CD8-positive, alpha-beta T cell (primary cell): ENCODE measurements at regions of chr10 and their contacts with region 1.

Region 1: DNA sequence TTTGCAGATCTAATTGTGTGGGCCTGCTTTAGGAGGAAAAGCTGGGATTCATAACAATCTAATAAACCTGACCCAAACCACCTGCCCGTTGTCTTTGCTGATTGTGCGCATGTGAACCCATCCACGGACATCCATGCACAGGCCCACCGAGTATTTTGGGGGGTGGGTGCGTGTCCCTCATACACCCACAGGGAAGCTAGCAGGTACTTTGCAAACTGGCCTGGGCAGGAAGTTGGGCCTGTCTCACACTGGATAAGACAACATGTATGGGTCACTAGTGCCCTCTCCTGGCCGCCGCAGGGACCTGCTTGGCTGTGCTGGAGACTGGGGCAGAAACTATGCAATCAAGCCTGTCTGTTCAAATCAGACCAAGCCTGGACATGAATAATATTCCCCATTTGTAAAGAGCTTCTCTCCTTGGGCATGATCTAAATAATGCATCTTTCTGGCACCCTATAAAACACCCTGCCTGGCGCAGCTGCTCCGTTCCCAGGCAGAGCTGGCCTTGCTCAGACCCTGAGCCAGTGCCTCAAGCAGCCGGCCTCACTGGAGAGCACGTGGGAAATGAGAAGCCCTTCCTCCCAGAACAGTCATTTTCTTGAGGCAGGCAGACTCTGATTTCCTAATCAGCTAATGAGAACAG is 15.8 kb downstream of the ECHDC3 start:
- DNase-seq: peak; percentile 59 to 88 (median 81)
- ATAC-seq: peak; percentile 99
- H3K4me3 ChIP-seq: no peak overlapping the region
- H3K4me3 Mint-ChIP-seq: no peak overlapping the region
- H3K27ac ChIP-seq: no peak overlapping the region
- H3K27ac Mint-ChIP-seq: no peak overlapping the region
- H3K4me1 ChIP-seq: no peaks in the 10 kb centered on the region
- H3K4me1 Mint-ChIP-seq: peaks cover 3% of the 10 kb centered on the region
- H3K27me3 ChIP-seq: no peaks in the 10 kb centered on the region
- H3K27me3 Mint-ChIP-seq: no peaks in the 10 kb centered on the region
- CTCF ChIP-seq: peak; percentile 81

Region 2: DNA sequence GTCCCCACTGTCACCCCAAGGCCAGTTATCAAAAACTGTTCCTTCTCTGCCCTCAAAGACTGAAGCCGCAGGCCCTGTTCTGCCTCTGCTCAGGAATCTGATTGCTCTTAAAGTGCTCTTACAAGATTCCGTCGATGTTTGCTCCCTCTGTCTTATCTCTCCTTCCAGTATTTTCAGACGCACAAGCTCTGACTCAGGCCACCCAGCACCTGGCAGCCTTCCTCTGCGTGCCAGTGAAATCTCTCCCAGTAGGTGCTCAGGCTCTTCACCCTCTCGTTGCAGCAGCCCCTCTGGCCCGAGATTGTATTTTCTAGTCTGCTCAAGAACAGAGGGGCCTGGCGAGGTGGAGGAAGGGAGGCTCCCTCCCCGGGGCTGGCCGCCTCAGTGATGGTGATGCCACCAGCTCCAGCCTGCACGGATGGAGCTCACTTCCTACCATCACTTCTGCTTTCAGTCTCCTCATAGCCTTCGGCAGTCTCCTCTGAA is 422.7 kb before region 1 on chr10:
- CTCF ChIA-PET with region 1: no interaction called
- POLR2A ChIA-PET with region 1: no interaction called
- intact Hi-C with region 1: loop called in 1 of 2 experiments (anchors 5 kb)
- DNase-seq: peak in 1 of 9 experiments; percentile 48
- ATAC-seq: no peak
- H3K4me3 ChIP-seq: no peak overlapping the region
- H3K4me3 Mint-ChIP-seq: no peak overlapping the region
- H3K27ac ChIP-seq: no peak overlapping the region
- H3K27ac Mint-ChIP-seq: peak overlapping the region; percentile 80
- H3K4me1 ChIP-seq: peaks cover 14% of the 10 kb centered on the region
- H3K4me1 Mint-ChIP-seq: peaks cover 47% of the 10 kb centered on the region
- H3K27me3 ChIP-seq: no peaks in the 10 kb centered on the region
- H3K27me3 Mint-ChIP-seq: no peaks in the 10 kb centered on the region
- CTCF ChIP-seq: no peak

Region 3: DNA sequence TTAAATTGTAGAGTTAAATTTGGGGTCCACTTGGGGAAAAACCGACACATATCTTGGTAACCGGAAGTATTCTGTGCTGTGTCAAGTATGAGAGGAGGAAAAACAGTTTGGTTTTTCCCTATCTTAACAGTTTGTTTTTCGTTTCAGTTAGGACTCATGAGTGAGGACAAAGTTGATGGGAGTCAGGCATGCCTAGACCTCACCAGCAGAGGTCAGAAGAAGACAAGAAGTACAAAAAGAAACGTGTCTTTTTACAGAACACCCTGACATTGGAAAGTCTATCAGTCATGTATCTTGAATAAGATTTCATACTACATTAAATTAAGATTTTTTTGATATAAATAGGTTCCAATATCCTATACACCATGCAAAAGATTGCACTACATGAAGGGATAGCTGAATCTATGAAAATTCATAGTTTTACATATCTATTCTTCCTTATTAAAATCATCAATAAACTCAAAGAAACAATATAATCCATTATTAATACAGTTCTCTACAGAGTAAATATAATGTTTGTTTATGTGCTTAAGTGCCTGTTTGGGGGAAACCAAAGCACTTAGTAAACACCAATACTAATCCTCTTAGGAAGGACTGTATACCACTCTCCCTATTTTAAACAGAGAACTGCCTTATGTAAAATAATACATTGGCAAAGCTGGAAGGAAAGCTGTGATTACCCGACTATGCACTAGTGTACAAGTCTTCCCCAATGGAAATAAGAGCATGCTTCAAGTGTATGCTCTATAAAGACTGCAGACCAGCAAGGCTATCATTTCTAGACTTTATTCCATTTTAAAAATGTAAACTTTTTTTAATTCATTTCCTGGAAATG is 242.1 kb before region 1 on chr10:
- CTCF ChIA-PET with region 1: interaction called, 104 read pairs
- POLR2A ChIA-PET with region 1: interaction called, 3 read pairs
- intact Hi-C with region 1: loop called (anchors 1 kb)
- DNase-seq: peak in 7 of 9 experiments; percentile 3 to 77 (median 45)
- ATAC-seq: peak; percentile 85
- H3K4me3 ChIP-seq: no peak overlapping the region
- H3K4me3 Mint-ChIP-seq: no peak overlapping the region
- H3K27ac ChIP-seq: no peak overlapping the region
- H3K27ac Mint-ChIP-seq: no peak overlapping the region
- H3K4me1 ChIP-seq: peaks cover 6% of the 10 kb centered on the region
- H3K4me1 Mint-ChIP-seq: peaks cover 4% of the 10 kb centered on the region
- H3K27me3 ChIP-seq: no peaks in the 10 kb centered on the region
- H3K27me3 Mint-ChIP-seq: no peaks in the 10 kb centered on the region
- CTCF ChIP-seq: peak; percentile 67

Region 4: GRCh38 chr10:11684717-11685645 is 73.0 kb before region 1 on chr10:
- CTCF ChIA-PET with region 1: interaction called, 3 read pairs
- POLR2A ChIA-PET with region 1: no interaction called
- intact Hi-C with region 1: loop called in 1 of 2 experiments (anchors 2 kb)
- DNase-seq: peak; percentile 24 to 86 (median 62)
- ATAC-seq: peak; percentile 81
- H3K4me3 ChIP-seq: peak overlapping the region; percentile 45 to 47
- H3K4me3 Mint-ChIP-seq: peak overlapping the region; percentile 86
- H3K27ac ChIP-seq: peak overlapping the region; percentile 79 to 90
- H3K27ac Mint-ChIP-seq: peak overlapping the region; percentile 98
- H3K4me1 ChIP-seq: peaks cover 56% of the 10 kb centered on the region
- H3K4me1 Mint-ChIP-seq: peaks cover 70% of the 10 kb centered on the region
- H3K27me3 ChIP-seq: no peaks in the 10 kb centered on the region
- H3K27me3 Mint-ChIP-seq: no peaks in the 10 kb centered on the region
- CTCF ChIP-seq: no peak

Region 5: GRCh38 chr10:11724938-11725776 is 32.8 kb before region 1 on chr10:
- CTCF ChIA-PET with region 1: interaction called, 11 read pairs
- POLR2A ChIA-PET with region 1: no interaction called
- intact Hi-C with region 1: loop called in 1 of 2 experiments (anchors 1 kb)
- DNase-seq: peak in 2 of 9 experiments; percentile 48 to 68
- ATAC-seq: peak; percentile 73
- H3K4me3 ChIP-seq: no peak overlapping the region
- H3K4me3 Mint-ChIP-seq: no peak overlapping the region
- H3K27ac ChIP-seq: no peak overlapping the region
- H3K27ac Mint-ChIP-seq: no peak overlapping the region
- H3K4me1 ChIP-seq: no peaks in the 10 kb centered on the region
- H3K4me1 Mint-ChIP-seq: peaks cover 4% of the 10 kb centered on the region
- H3K27me3 ChIP-seq: no peaks in the 10 kb centered on the region
- H3K27me3 Mint-ChIP-seq: peaks cover 8% of the 10 kb centered on the region
- CTCF ChIP-seq: peak; percentile 79

Region 6: GRCh38 chr10:11742005-11742778 is 15.8 kb before region 1 on chr10 and contains the start of gene ECHDC3:
- CTCF ChIA-PET with region 1: interaction called, 14 read pairs
- POLR2A ChIA-PET with region 1: no interaction called
- intact Hi-C with region 1: no loop called
- DNase-seq: peak; percentile 12 to 70 (median 49)
- ATAC-seq: peak; percentile 90
- H3K4me3 ChIP-seq: peak within 1 kb of the TSS; percentile 48 to 62
- H3K4me3 Mint-ChIP-seq: peak within 1 kb of the TSS; percentile 81
- H3K27ac ChIP-seq: no peak within 1 kb of the TSS
- H3K27ac Mint-ChIP-seq: no peak within 1 kb of the TSS
- H3K4me1 ChIP-seq: peaks cover 8% of the 10 kb centered on the region
- H3K4me1 Mint-ChIP-seq: peaks cover 16% of the 10 kb centered on the region
- H3K27me3 ChIP-seq: peaks cover 0 to 4% of the 10 kb centered on the region in 2 experiments
- H3K27me3 Mint-ChIP-seq: peaks cover 21% of the 10 kb centered on the region
- CTCF ChIP-seq: no peak
- total RNA-seq, gene ECHDC3: 0.90 to 1.3 TPM

Region 7: DNA sequence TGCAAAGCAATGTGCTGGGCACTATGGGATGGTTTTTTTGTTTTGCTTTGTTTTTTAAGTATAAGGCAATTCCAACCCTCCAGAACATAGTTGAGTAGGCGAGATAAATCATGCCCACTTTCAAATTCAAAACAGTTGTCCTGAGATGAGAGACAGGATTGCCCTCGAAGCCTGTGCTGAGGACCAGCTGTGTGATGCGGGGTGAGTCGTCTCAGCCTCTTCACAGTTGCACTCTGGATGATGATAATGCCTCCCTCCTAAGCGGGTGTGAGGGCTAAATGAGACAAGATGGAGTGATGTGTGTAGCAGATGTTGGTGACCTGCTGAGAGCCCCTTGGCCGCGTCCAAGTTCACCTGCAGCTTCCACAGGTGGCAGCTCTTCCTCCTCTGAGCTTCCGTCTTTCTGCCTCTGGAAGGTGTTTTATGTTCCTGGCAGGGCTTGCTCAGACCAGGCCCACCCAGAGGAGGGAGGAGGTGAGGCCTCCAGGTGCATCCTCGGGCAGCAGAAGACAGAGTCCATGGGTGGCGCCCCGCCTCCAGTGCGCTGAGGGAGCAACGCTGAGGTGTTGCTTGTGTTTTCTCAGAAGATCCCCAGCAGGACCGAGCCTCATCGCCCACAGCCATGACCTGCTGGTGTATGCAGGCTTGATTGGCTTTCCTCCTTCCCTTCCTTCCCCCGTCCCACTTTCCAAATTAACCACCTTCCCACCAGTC is 14.8 kb after region 1 on chr10:
- CTCF ChIA-PET with region 1: interaction called, 11 read pairs
- POLR2A ChIA-PET with region 1: no interaction called
- intact Hi-C with region 1: no loop called
- DNase-seq: no peak
- ATAC-seq: no peak
- H3K4me3 ChIP-seq: no peak overlapping the region
- H3K4me3 Mint-ChIP-seq: no peak overlapping the region
- H3K27ac ChIP-seq: no peak overlapping the region
- H3K27ac Mint-ChIP-seq: no peak overlapping the region
- H3K4me1 ChIP-seq: no peaks in the 10 kb centered on the region
- H3K4me1 Mint-ChIP-seq: no peaks in the 10 kb centered on the region
- H3K27me3 ChIP-seq: no peaks in the 10 kb centered on the region
- H3K27me3 Mint-ChIP-seq: peaks cover 4% of the 10 kb centered on the region
- CTCF ChIP-seq: no peak